ENCODE measurements at regions of chr2 and their contacts with region 1.

Region 1: GRCh38 chr2:97742381-97742847 is 29.0 kb downstream of the ZAP70 start:
- DNase-seq: no peak
- H3K4me3 ChIP-seq: no peak overlapping the region
- H3K4me3 Mint-ChIP-seq: no peak overlapping the region
- H3K27ac Mint-ChIP-seq: no peak overlapping the region
- H3K4me1 ChIP-seq: no peaks in the 10 kb centered on the region
- H3K4me1 Mint-ChIP-seq: no peaks in the 10 kb centered on the region
- H3K27me3 ChIP-seq: no peaks in the 10 kb centered on the region
- H3K27me3 Mint-ChIP-seq: no peaks in the 10 kb centered on the region
- CTCF ChIP-seq: no peak

Region 2: GRCh38 chr2:98269274-98269673 is 526.9 kb after region 1 on chr2:
- CTCF ChIA-PET with region 1: interaction called, 5 read pairs
- POLR2A ChIA-PET with region 1: no interaction called
- intact Hi-C with region 1: loop called (anchors 2 kb)
- DNase-seq: peak in 1 of 2 experiments; percentile 69
- H3K4me3 ChIP-seq: no peak overlapping the region
- H3K4me3 Mint-ChIP-seq: no peak overlapping the region
- H3K27ac Mint-ChIP-seq: no peak overlapping the region
- H3K4me1 ChIP-seq: no peaks in the 10 kb centered on the region
- H3K4me1 Mint-ChIP-seq: no peaks in the 10 kb centered on the region
- H3K27me3 ChIP-seq: no peaks in the 10 kb centered on the region
- H3K27me3 Mint-ChIP-seq: peaks cover 1% of the 10 kb centered on the region
- CTCF ChIP-seq: peak; percentile 78

Region 3: DNA sequence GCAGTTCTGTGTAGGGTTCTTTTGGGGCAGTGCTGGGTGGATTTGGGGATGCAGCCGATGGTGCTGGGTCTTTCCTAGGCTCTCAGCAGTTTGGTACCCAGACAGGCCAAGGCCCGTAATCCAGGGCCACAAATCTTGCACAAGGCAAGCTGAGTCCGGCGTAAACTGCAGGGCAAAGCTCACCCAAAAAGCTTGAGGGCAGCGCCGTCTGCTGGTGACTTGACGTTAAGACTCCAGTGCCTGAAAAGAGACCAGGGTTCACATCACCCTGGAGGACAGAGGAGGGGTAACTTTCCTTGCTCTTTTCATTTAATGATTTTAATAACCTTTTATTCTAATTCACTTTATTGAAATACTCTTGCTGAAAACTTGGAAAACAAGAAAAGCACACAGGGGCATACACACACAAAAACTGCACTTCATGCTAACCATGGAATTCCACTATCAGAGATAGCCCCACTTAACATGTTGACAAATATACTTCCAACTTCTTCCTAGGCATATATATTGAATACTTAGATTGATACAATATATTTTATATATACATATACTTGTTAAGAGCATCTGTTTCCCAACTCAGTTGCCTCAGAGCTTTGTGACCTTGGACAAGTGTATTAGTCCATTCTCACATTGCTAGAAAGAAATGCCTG is 642.8 kb after region 1 on chr2:
- CTCF ChIA-PET with region 1: no interaction called
- POLR2A ChIA-PET with region 1: no interaction called
- intact Hi-C with region 1: loop called (anchors 2 kb)
- DNase-seq: peak; percentile 71 to 84
- H3K4me3 ChIP-seq: no peak overlapping the region
- H3K4me3 Mint-ChIP-seq: no peak overlapping the region
- H3K27ac Mint-ChIP-seq: no peak overlapping the region
- H3K4me1 ChIP-seq: no peaks in the 10 kb centered on the region
- H3K4me1 Mint-ChIP-seq: no peaks in the 10 kb centered on the region
- H3K27me3 ChIP-seq: no peaks in the 10 kb centered on the region; the same call in 1 of the 2 replicates
- H3K27me3 Mint-ChIP-seq: peaks cover 5% of the 10 kb centered on the region
- CTCF ChIP-seq: peak; percentile 93 to 97